ENCODE measurements at regions of chr12 and their contacts with region 1.

Region 1: GRCh38 chr12:96501139-96501761 is 11.9 kb downstream of the CFAP54 start:
- DNase-seq: peak; percentile 57
- ATAC-seq: peak; percentile 87
- H3K4me3 Mint-ChIP-seq: peak overlapping the region; percentile 16
- H3K27ac Mint-ChIP-seq: peak overlapping the region; percentile 78
- H3K4me1 Mint-ChIP-seq: peaks cover 52% of the 10 kb centered on the region
- H3K27me3 Mint-ChIP-seq: no peaks in the 10 kb centered on the region

Region 2: DNA sequence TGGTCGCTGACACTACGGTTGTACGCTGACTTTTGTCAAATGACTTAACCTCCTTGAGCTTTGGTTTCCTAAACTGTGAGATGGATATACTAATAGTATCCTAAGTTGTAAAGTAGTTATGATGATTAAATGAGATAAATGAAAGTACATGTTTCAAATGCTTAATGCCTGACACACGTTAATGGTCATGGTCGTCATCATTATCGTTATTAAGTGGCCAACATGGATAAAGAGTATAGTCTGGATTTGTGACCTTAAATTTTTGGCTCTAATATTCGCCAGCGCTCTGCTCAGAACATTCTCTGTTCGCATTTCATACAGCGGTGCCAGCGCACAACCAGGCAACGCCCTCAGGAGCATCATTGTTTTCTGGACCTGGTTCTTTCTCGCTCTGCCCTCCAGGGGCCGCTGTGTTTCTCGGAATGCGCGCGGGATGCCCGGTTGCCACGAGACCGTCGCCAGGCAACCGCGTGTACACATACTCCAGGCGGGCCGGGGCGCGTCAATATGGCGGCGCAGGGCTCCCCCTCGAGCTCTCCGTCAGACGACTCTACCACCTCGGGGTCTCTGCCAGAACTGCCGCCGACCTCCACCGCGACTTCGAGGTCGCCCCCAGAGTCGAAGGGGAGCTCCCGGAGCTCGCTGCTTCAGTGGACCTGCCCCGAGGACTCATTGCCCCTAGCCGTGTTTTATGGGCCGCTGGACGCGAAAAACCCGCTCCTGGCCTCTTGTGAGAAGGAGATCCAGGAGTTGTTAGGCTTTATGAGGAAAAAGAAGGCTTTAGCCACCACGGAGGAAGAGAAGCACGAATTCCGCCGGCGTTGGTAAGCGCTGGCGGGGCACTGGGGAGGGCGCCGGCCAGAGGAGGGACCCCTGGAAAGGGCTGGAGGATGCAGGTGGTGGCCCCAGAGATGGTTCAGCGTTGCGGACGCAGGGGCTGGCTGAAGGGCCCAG is 11.9 kb before region 1 on chr12 and contains the start of gene CFAP54:
- CTCF ChIA-PET with region 1: interaction called, 41 read pairs
- POLR2A ChIA-PET with region 1: no interaction called
- DNase-seq: peak; percentile 96
- ATAC-seq: peak; percentile 84
- H3K4me3 Mint-ChIP-seq: peak within 1 kb of the TSS; percentile 86
- H3K27ac Mint-ChIP-seq: peak within 1 kb of the TSS; percentile 53
- H3K4me1 Mint-ChIP-seq: peaks cover 35% of the 10 kb centered on the region
- H3K27me3 Mint-ChIP-seq: peaks cover 12% of the 10 kb centered on the region
- total RNA-seq, gene CFAP54: 0.18 to 1.2 TPM

Measured in activated CD8-positive, alpha-beta T cell treated with anti-CD3 and anti-CD28 coated beads, Interleukin-2, amount 10 ng/mL, durations not matched to agents 7 days and 5 days (primary cell).